Aorta (tissue), 5 donors: ENCODE measurements at regions of chr1 and their contacts with region 1.

Region 1: DNA sequence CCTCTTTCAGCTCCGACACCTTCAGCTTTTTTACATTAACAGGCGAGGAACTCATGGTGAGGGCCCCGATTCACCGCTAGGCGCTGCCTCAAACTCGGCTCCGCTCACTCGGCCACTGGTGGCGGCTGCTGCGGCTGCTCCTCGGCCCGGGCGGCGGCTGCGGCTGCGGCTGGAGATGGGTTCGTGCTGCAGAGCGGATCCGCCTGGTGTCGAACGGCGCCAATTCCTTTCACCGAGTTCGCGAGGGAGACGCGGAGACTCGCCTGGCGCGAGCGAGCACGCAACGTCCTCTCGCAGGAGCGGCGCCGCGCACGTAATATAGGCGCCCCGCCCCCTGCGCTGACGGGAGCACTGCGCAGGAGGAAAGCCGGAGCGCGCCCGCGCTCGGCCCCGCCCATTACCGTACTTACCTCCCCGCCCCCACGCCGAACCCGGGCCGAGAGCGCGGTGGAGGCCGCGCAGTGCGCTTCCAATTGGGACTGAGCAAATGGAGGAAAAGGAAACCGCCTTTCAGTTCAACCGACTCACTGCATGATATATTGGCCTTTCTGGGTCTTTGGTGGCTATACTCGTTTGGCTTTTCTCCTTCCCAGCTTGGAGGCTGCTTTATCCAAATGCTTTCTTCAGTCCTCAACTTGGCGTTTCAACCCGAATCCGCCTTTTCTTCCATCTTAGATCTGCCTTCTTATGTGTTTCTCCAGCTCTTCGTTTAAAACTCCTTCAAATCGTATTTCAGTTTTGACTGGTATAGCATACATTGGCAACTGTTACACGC is at the start of gene HNRNPU:
- DNase-seq: peak; percentile 98 to 99
- ATAC-seq: peak; percentile 97
- H3K4me3 ChIP-seq: peak within 1 kb of the TSS; percentile 74 to 88
- H3K27ac ChIP-seq: peak within 1 kb of the TSS; percentile 97 to 99
- H3K4me1 ChIP-seq: no peaks in the 10 kb centered on the region
- H3K27me3 ChIP-seq: no peaks in the 10 kb centered on the region
- total RNA-seq, gene HNRNPU: 258 to 286 TPM

Region 2: DNA sequence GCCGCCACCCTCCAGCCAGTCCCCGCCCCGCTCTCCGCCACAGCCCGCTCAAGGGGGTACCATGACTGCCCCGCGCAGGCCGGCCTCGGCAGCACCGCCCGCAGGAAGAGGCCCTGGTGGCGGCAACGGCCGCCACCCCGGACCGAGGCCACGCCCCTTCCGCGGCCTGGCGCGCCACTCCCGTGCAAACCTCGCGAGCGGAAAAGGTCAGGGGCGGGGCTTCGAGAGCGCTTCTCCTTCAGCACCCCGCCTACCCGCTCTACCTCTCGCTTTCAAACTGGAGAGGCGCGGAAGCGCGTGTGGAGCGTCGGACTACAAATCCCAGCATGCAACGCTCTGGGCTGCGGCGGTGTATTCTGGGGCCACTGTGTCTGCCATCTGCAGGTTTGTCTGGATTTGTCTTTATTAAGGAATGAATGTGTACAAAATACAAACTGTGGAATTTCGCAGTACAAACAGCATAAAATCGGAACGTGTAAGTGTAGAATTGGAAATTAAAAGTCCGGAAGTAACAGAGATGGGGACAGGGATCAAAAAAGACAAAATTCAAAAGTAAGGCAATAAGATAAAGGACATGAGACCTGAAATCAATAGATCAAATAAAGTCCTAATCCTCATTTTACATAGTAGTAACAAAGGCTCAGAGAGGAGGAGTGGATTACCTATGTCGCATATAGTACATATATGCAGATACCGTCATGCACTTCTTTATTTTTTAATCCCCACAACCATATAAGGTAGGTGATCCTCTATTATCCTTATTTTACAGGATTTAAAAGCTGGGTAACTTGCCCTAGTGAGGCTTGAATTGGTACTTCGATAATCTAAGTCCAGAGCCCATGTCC is 412.3 kb before region 1 on chr1:
- intact Hi-C with region 1: loop called in 1 of 2 experiments (anchors 10 kb)
- DNase-seq: peak; percentile 100
- ATAC-seq: peak; percentile 100
- H3K4me3 ChIP-seq: peak overlapping the region in 1 of 2 donors; percentile 40
- H3K27ac ChIP-seq: no peak overlapping the region
- H3K4me1 ChIP-seq: peaks cover 5% of the 10 kb centered on the region in 2 donors
- H3K27me3 ChIP-seq: no peaks in the 10 kb centered on the region

Region 3: DNA sequence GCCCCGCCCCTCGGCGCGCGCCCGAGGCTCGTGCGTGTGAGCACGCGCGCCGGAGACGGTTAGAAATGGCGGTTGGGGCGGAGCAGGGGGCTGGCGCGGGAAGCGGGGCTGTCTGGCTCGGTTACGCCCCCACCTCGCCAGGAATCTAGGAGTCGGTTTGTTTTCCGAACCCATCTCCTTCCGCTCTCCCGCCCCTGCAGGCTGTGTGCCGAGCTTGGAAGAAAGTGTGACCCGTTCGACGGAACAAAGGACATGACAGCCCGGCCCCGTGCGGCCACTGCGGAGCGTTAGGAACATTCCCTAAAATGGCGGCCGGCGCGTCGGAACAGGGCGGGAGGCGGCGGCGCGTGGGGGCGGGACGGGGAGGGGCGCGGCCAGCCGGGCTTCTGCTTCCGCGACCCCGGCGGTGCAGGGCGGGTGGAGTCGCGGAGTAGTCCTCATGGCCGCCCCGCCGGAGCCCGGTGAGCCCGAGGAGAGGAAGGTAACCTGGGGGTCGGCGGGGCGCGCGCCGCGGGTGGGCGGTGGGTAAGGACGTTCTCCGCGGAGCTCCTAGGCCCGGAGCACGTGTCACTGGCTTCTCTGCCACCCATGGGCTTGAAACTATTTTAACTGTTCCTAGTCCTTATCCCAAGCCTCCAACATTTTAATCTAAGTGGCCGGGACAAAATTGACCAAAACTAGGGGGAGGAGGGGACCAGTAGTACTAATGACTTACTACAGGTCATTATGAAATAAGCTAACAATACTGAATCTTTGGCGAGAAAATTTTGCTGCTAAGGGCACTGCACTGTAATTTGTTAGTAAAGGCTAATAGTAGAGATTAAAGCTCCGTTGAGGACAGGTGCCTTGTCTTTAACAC is 28.9 kb before region 1 on chr1 and contains the start of gene COX20:
- intact Hi-C with region 1: loop called (anchors 2 kb)
- DNase-seq: peak; percentile 94 to 96
- ATAC-seq: peak; percentile 95
- H3K4me3 ChIP-seq: peak within 1 kb of the TSS; percentile 92 to 98
- H3K27ac ChIP-seq: peak within 1 kb of the TSS; percentile 97
- H3K4me1 ChIP-seq: peaks cover 3 to 6% of the 10 kb centered on the region in 2 donors
- H3K27me3 ChIP-seq: no peaks in the 10 kb centered on the region
- total RNA-seq, gene COX20: 22.8 to 29.7 TPM

Region 4: GRCh38 chr1:244970661-244971551 is 106.5 kb after region 1 on chr1:
- intact Hi-C with region 1: loop called (anchors 1 to 2 kb)
- DNase-seq: peak; percentile 96 to 97
- ATAC-seq: peak; percentile 95
- H3K4me3 ChIP-seq: peak overlapping the region; percentile 76 to 94
- H3K27ac ChIP-seq: peak overlapping the region; percentile 97 to 98
- H3K4me1 ChIP-seq: peaks cover 0 to 2% of the 10 kb centered on the region in 2 donors
- H3K27me3 ChIP-seq: no peaks in the 10 kb centered on the region

Region 5: GRCh38 chr1:245041058-245041698 is 176.7 kb after region 1 on chr1:
- intact Hi-C with region 1: loop called (anchors 2 to 5 kb)
- DNase-seq: no peak
- ATAC-seq: no peak
- H3K4me3 ChIP-seq: no peak overlapping the region
- H3K27ac ChIP-seq: no peak overlapping the region
- H3K4me1 ChIP-seq: no peaks in the 10 kb centered on the region
- H3K27me3 ChIP-seq: no peaks in the 10 kb centered on the region

Region 6: GRCh38 chr1:246566128-246566812 is 1701.8 kb after region 1 on chr1 and contains the starts of genes CNST and TFB2M:
- intact Hi-C with region 1: loop called in 1 of 2 experiments (anchors 10 kb)
- DNase-seq: peak; percentile 99
- ATAC-seq: peak; percentile 100
- H3K4me3 ChIP-seq: peak within 1 kb of the TSS; percentile 71 to 84
- H3K27ac ChIP-seq: peak within 1 kb of the TSS; percentile 3 to 90
- H3K4me1 ChIP-seq: no peaks in the 10 kb centered on the region
- H3K27me3 ChIP-seq: no peaks in the 10 kb centered on the region
- total RNA-seq, gene CNST: 24.5 to 27.8 TPM
- total RNA-seq, gene TFB2M: 5.2 to 5.6 TPM